ENCODE measurements at regions of chr4 and their contacts with region 1.

Region 1: GRCh38 chr4:38675146-38676121 is 11.4 kb downstream of the KLF3 start:
- DNase-seq: no peak
- ATAC-seq: peak; percentile 81
- H3K4me3 ChIP-seq: no peak overlapping the region
- H3K27ac ChIP-seq: no peak overlapping the region
- H3K4me1 ChIP-seq: peaks cover 47% of the 10 kb centered on the region
- H3K27me3 ChIP-seq: no peaks in the 10 kb centered on the region; a peak in 1 of 4 replicates
- CTCF ChIP-seq: peak; percentile 80 to 96 (median 89)
- EP300 ChIP-seq: peak in 1 of 2 experiments; percentile 36; a peak in 1 of 4 replicates
- POLR2A ChIP-seq: no peak
- RAD21 ChIP-seq: peak; percentile 100

Region 2: GRCh38 chr4:38013461-38014366 is 661.7 kb before region 1 on chr4:
- CTCF ChIA-PET with region 1: no interaction called
- POLR2A ChIA-PET with region 1: no interaction called
- RAD21 ChIA-PET with region 1: no interaction called
- SMC1A ChIA-PET with region 1: no interaction called
- in situ Hi-C with region 1: no loop called
- intact Hi-C with region 1: no loop called
- DNase-seq: no peak
- ATAC-seq: no peak
- H3K4me3 ChIP-seq: no peak overlapping the region
- H3K27ac ChIP-seq: no peak overlapping the region
- H3K4me1 ChIP-seq: no peaks in the 10 kb centered on the region
- H3K27me3 ChIP-seq: no peaks in the 10 kb centered on the region
- CTCF ChIP-seq: no peak
- EP300 ChIP-seq: no peak
- POLR2A ChIP-seq: no peak
- RAD21 ChIP-seq: no peak

Region 3: DNA sequence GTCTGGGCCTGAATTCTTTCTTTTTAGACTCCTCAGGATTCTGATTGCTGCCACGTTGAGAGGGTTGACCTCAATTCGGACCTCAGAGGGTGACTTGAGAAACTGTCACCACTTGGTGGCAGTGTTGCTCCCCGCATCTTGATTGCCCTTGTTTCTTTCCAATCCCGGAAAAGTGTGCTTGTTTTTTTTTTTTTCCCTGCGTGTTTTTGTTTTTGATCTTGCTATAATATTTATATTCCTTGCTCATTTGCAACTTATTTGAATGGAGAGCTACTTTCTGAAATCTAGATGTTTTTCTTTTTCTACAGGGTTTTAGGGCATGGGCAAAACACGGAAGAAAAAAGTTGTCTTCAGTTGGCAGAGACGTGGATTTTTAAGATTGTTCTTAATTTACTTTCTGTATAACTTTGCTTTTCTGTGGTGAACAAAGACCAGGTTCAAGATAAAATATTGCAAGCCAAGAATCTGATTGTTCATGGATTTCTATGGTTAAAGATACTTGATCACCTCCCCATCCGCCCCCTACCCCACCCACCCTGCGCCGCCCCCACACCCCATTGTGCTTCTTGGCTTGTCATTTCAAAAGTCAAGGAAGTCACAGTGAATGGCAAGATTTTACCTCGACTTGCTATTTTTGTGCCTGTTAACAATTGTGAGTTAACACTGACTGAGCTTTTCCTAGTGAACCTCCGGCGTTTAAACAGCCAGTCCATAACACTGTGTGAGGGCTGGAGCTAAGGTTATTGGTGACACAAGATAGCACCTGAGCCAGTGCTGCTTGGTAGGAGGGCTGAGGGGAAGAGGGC is 613.1 kb before region 1 on chr4:
- CTCF ChIA-PET with region 1: interaction called, 37 read pairs
- POLR2A ChIA-PET with region 1: no interaction called
- RAD21 ChIA-PET with region 1: interaction called, 63 read pairs
- SMC1A ChIA-PET with region 1: interaction called, 41 read pairs
- in situ Hi-C with region 1: loop called (anchors 5 kb)
- intact Hi-C with region 1: loop called (anchors 1 kb)
- DNase-seq: no peak
- ATAC-seq: peak; percentile 93
- H3K4me3 ChIP-seq: no peak overlapping the region
- H3K27ac ChIP-seq: peak overlapping the region; percentile 6
- H3K4me1 ChIP-seq: peaks cover 3% of the 10 kb centered on the region; the same call in 1 of the 2 replicates
- H3K27me3 ChIP-seq: no peaks in the 10 kb centered on the region
- CTCF ChIP-seq: peak; percentile 67 to 85 (median 80)
- EP300 ChIP-seq: no peak
- POLR2A ChIP-seq: no peak
- RAD21 ChIP-seq: peak; percentile 95

Region 4: DNA sequence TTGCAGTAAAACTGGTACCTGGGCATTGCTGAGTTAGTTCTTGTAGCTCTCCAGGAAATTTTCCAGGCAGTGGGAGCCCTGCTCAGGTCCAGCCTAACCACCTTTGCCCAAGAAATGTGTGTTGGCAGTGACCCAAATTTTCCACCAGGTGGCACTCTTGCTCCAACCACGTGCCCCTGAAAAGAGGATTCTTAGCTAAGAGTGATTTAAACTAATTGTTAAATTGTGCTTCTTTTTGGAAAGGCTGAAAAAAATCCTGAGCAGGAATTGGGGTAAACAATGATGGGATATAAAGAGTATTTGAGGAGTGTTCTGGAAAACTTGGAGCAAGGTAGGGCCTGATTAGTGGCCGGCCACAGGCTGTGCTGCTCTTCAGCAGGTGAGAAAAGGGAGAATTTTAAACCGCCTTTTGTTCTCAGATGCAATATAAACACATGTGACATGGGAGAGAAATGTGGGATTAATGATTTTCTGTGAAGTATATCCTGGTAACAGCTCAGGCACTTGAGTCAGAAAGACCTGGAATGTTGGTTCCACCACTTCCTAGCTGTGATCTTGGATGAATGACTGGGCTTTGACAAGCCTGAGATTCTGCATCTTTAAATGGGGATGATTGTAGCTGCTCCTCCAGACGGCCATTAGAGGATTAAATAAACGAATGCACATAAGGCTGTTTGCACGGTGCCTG is 495.6 kb before region 1 on chr4:
- CTCF ChIA-PET with region 1: interaction called, 225 read pairs
- POLR2A ChIA-PET with region 1: interaction called, 20 read pairs
- RAD21 ChIA-PET with region 1: interaction called, 208 read pairs
- SMC1A ChIA-PET with region 1: interaction called, 268 read pairs
- in situ Hi-C with region 1: loop called (anchors 5 kb)
- intact Hi-C with region 1: loop called (anchors 1 kb)
- DNase-seq: peak; percentile 56
- ATAC-seq: peak; percentile 85
- H3K4me3 ChIP-seq: no peak overlapping the region
- H3K27ac ChIP-seq: no peak overlapping the region
- H3K4me1 ChIP-seq: peaks cover 39% of the 10 kb centered on the region
- H3K27me3 ChIP-seq: no peaks in the 10 kb centered on the region
- CTCF ChIP-seq: peak; percentile 76 to 94 (median 88)
- EP300 ChIP-seq: no peak
- POLR2A ChIP-seq: no peak
- RAD21 ChIP-seq: peak; percentile 98

Region 5: DNA sequence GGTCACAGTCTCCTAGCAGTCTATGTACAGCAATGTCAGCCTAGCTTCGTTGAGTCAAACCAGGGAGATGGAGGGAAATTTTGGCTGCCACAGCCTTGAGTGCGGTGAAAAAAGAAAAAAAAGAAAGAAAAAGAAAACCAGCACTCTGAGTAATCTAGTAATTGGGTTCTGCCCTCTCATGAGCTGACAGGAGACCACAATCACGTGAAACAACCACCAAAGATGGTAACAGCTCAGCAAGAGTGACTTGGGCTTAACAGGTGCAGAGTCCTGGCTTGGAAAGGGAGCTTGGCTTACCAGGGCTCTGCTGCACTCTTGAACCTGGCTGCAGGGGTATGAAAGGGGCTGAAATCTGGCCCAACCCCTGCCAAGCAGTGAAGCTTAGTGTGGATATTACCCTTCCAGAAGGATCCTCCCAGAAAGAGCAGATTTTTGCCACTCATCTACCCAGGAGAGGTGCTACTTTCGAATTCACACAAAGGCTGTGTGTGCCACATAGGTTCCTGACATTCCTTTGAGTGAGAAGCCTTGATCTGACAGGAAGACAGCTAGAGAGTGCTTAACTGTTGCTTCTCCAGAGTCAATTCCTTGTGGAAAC is 364.9 kb before region 1 on chr4:
- CTCF ChIA-PET with region 1: interaction called, 13 read pairs
- POLR2A ChIA-PET with region 1: no interaction called
- RAD21 ChIA-PET with region 1: interaction called, 17 read pairs
- SMC1A ChIA-PET with region 1: interaction called, 18 read pairs
- in situ Hi-C with region 1: loop called (anchors 5 kb)
- intact Hi-C with region 1: no loop called
- DNase-seq: peak; percentile 97
- ATAC-seq: peak; percentile 91
- H3K4me3 ChIP-seq: no peak overlapping the region
- H3K27ac ChIP-seq: peak overlapping the region; percentile 77
- H3K4me1 ChIP-seq: peaks cover 61% of the 10 kb centered on the region
- H3K27me3 ChIP-seq: no peaks in the 10 kb centered on the region
- CTCF ChIP-seq: no peak
- EP300 ChIP-seq: peak; percentile 84 to 98
- POLR2A ChIP-seq: peak; percentile 39; the same call in 1 of the 2 replicates
- RAD21 ChIP-seq: peak; percentile 31

Region 6: DNA sequence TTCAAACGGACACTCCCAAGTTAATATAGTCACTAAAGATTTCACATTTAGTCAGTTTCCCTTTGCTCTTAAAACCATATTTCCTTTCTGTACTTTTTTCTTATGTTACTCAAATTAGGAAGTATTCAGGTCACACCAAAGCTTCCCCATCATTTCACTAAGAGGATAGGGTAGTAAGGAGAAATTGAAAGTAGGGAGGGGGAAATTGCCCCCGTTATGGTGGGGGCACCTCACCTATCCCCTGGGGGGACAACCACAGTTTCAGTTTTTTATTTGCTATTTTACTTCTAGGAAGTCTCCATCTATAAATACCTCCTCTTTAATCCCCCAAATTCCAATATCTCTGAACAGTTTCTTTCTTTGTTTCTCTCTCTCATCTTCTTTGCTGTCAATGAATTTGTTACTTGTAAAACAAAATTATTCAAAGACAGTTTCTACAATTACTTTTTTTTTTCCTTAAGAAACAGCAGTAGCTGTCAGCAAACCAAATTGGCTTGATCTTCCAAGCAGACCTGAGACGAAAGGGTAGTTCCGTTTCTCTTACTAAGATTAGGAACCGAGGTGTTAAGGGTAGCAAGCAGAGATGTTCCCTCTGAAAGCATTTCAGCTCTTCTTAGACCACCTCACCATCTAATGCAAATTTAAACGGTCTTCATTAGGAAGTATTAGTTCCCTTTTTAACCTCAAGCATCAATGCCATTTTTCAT is 171.6 kb before region 1 on chr4:
- CTCF ChIA-PET with region 1: interaction called, 6 read pairs
- POLR2A ChIA-PET with region 1: no interaction called
- RAD21 ChIA-PET with region 1: interaction called, 10 read pairs
- SMC1A ChIA-PET with region 1: interaction called, 4 read pairs
- in situ Hi-C with region 1: no loop called
- intact Hi-C with region 1: loop called (anchors 5 kb)
- DNase-seq: peak; percentile 86
- ATAC-seq: peak; percentile 95
- H3K4me3 ChIP-seq: no peak overlapping the region; the same call in 1 of the 2 replicates
- H3K27ac ChIP-seq: peak overlapping the region; percentile 47
- H3K4me1 ChIP-seq: peaks cover 31% of the 10 kb centered on the region
- H3K27me3 ChIP-seq: no peaks in the 10 kb centered on the region
- CTCF ChIP-seq: no peak
- EP300 ChIP-seq: peak; percentile 59 to 83; a peak in 1 of 4 replicates
- POLR2A ChIP-seq: no peak
- RAD21 ChIP-seq: no peak; the same call in 1 of the 2 replicates

Region 7: DNA sequence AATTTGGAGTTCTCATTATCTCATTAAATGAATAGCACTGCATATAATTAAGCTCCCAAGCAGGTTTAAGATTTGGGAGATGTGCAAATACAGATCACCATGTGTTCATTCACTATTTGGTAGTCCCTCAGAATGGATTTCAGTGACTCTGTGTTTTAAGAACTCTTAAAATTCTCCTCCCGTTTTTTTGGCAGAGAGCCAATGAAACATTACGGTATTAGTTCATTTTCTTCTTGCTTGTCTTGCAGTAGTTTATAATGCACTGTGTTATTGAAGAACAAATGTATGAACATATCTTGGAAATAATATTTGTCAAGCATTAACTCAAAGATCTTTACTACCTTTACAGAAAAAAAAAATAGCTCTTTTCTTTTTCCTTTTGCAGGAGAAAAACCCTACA is 21.3 kb after region 1 on chr4:
- CTCF ChIA-PET with region 1: interaction called, 11 read pairs
- POLR2A ChIA-PET with region 1: no interaction called
- RAD21 ChIA-PET with region 1: interaction called, 6 read pairs
- SMC1A ChIA-PET with region 1: interaction called, 4 read pairs
- in situ Hi-C with region 1: no loop called
- intact Hi-C with region 1: no loop called
- DNase-seq: no peak
- ATAC-seq: no peak
- H3K4me3 ChIP-seq: no peak overlapping the region
- H3K27ac ChIP-seq: no peak overlapping the region
- H3K4me1 ChIP-seq: no peaks in the 10 kb centered on the region
- H3K27me3 ChIP-seq: no peaks in the 10 kb centered on the region
- CTCF ChIP-seq: no peak
- EP300 ChIP-seq: no peak
- POLR2A ChIP-seq: no peak
- RAD21 ChIP-seq: no peak

Region 8: GRCh38 chr4:38782452-38783108 is 107.1 kb after region 1 on chr4 and contains the start of gene TLR10:
- CTCF ChIA-PET with region 1: interaction called, 22 read pairs
- POLR2A ChIA-PET with region 1: no interaction called
- RAD21 ChIA-PET with region 1: interaction called, 16 read pairs
- SMC1A ChIA-PET with region 1: interaction called, 19 read pairs
- in situ Hi-C with region 1: no loop called
- intact Hi-C with region 1: no loop called
- DNase-seq: peak; percentile 82
- ATAC-seq: peak; percentile 74
- H3K4me3 ChIP-seq: peak within 1 kb of the TSS; percentile 81
- H3K27ac ChIP-seq: peak within 1 kb of the TSS; percentile 96
- H3K4me1 ChIP-seq: peaks cover 22% of the 10 kb centered on the region
- H3K27me3 ChIP-seq: no peaks in the 10 kb centered on the region
- CTCF ChIP-seq: peak; percentile 60 to 68 (median 63)
- EP300 ChIP-seq: no peak
- POLR2A ChIP-seq: peak; percentile 72
- RAD21 ChIP-seq: peak; percentile 83
- polyA plus RNA-seq, gene TLR10: 31.5 to 41.8 TPM

Measured in GM12878 (cell line).